ENCODE measurements at regions of chr1 and their contacts with region 1.

Region 1: DNA sequence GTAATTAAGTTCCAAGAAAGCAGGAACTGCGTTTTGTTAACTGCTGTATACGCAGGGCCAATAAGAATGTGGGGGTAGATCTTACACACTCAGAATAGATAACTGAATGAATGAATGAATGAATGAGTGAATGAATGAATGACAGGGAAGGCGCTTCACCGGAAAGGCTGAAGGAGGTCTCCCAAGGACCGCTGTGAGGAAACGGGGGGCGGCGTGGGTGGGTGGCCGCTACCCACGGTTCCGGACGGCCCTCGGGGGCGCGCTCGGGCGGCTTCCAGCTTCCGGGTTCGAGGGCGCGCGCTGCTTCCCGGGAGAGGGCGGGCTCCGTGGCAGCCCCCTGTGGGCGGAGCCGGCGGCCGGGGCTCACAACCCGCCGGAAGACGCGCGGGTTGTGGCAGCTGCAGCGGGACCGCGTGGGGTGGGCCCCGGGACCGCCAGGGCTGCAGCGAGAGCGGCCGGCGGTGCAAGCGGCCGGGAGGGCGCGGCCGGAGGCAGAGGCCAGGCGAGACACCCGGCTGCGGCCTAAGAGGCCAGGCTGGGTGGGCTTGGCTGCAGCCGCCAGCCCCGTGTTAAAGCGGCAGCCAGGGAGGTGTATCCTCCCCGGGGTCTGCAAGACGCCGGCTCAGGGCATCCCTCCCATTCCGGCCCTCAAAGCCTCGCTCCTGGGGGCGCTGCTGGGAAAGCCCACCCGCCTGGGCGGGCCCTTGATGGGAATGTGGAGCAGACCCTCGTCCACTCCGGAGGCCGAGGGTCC is at the start of gene ZFP69:
- DNase-seq: peak; percentile 9 to 84
- H3K4me3 ChIP-seq: peak within 1 kb of the TSS; percentile 93 to 99
- H3K27ac ChIP-seq: peak within 1 kb of the TSS; percentile 68 to 77
- H3K4me1 ChIP-seq: peaks cover 0 to 4% of the 10 kb centered on the region in 2 donors
- H3K27me3 ChIP-seq: no peaks in the 10 kb centered on the region
- CTCF ChIP-seq: no peak
- total RNA-seq, gene ZFP69: 2.8 TPM

Region 2: DNA sequence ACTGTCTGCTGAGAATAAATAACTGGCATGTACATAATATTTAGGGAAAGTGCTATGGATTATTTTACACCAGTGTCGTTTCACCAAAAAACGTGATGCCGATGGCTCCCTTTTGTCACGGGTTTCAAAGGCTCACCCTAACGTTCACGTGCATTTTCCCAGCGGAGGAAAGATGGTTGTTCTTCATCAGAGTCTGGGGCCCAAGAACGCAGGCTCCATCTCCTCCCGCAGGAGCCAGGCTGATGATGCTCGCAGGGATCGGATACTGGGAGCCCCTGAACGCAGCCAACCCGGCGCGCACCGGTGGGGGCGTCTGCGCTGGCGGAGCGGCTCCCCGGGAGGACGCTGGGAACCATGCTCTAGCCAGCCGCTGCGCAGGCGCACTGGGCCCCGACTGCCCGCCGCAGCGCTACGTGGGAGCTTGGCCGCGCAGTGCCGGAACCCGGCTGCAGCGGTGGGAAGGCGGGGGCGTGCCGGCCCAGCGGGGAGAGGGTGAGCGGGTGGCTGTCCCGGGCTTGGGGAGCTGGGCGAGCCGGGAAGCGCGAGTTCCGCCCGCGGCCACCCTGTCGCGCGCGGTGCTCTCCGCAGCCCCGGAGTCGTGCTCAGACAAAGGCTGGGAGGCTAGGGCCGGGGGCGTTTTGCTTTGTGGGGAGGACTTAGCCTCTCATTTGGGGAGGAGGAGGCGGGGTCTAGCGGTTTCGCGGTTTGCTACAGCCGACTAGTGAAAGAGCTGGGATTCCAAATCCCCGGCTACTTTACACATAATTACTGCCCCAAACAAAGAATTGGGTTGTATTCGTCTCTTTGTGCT is 27.2 kb before region 1 on chr1 and contains the start of gene ZFP69B:
- intact Hi-C with region 1: loop called (anchors 1 kb)
- DNase-seq: peak; percentile 56 to 93
- H3K4me3 ChIP-seq: peak within 1 kb of the TSS; percentile 59 to 83
- H3K27ac ChIP-seq: peak within 1 kb of the TSS; percentile 62 to 85
- H3K4me1 ChIP-seq: peaks cover 0 to 3% of the 10 kb centered on the region in 2 donors
- H3K27me3 ChIP-seq: no peaks in the 10 kb centered on the region
- CTCF ChIP-seq: peak in 1 of 3 experiments; percentile 16
- total RNA-seq, gene ZFP69B: 3.8 TPM

Region 3: DNA sequence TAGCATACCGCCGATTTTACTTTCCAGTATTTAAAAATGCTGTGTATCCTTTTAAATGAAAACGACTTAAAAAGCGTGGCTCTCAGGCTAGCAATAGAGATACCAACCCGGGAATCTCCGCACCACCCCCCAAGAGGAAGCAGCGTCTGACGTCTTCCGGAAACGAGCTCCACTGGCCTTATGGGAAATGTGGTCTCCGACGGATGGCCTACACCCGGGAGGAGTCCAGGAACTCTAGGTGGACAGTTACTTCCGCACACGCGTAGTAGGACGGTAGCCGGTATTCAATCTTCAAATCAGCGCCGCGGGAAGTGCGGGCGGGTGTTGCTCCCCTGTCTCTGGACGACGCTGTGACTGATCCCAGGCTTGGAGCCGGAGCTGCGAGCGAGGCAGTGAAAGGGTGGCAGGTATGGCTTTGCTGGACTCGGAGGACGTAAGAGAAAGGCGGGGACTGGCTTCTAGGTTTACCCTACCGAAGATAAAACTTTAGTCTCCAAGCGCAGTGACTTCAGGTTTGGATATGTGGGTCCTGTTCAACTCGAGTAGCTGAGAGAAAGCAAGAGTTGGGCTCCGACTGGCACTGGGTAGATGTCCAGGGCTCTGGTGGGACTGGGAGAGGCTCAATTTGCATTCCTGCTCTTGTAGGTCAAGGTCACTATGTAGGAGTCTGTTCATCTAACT is 54.4 kb after region 1 on chr1 and contains the start of gene ZNF684:
- intact Hi-C with region 1: loop called (anchors 1 kb)
- DNase-seq: peak; percentile 63 to 94
- H3K4me3 ChIP-seq: peak within 1 kb of the TSS; percentile 59 to 77
- H3K27ac ChIP-seq: peak within 1 kb of the TSS; percentile 77 to 81
- H3K4me1 ChIP-seq: peaks cover 0 to 8% of the 10 kb centered on the region in 2 donors
- H3K27me3 ChIP-seq: no peaks in the 10 kb centered on the region
- CTCF ChIP-seq: no peak
- total RNA-seq, gene ZNF684: 0.85 TPM

Measured in ascending aorta (tissue), 2 donors.